ENCODE measurements at regions of chr17 and their contacts with region 1.

Region 1: GRCh38 chr17:31508288-31509094 is 117.0 kb downstream of the RAB11FIP4 start:
- DNase-seq: peak; percentile 83
- H3K4me3 Mint-ChIP-seq: peak overlapping the region; percentile 82
- H3K27ac Mint-ChIP-seq: peak overlapping the region; percentile 100
- H3K4me1 Mint-ChIP-seq: peaks cover 52% of the 10 kb centered on the region
- H3K27me3 Mint-ChIP-seq: no peaks in the 10 kb centered on the region

Region 2: GRCh38 chr17:31327534-31328159 is 180.8 kb before region 1 on chr17:
- intact Hi-C with region 1: no loop called
- DNase-seq: no peak
- H3K4me3 Mint-ChIP-seq: no peak overlapping the region
- H3K27ac Mint-ChIP-seq: peak overlapping the region; percentile 34
- H3K4me1 Mint-ChIP-seq: peaks cover 33% of the 10 kb centered on the region
- H3K27me3 Mint-ChIP-seq: no peaks in the 10 kb centered on the region

Region 3: DNA sequence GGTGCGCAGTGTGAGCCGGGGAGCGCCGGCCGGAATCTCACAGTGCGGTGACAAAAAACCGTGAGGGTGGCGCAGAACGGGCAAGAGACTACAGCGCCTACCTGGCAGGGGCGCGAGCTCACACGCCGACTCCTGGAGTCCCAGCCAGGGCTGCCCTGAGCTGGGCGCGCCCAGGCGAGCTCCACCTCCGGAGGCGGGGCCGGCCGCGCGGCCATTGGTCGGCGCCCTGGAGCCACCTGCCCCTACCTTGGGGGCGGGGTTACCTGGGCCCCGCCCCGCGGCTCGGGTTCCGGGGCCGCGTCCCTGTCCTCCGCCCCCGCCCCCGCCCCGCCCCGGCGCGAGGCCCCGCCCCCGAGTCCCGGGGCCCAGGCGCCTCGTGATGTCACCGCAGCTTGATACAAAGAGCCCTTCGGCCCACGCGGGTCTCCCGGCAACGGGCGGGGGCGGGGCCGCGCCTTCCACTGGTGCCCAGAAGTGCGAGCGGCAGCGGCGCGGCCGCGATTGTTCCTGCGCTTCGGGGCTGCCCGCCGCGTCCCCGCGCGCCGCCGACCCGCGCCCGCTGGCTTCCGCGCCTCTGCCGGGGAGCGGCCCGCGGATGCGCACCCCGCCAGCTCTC is 20.7 kb before region 1 on chr17:
- intact Hi-C with region 1: loop called (anchors 1 kb)
- DNase-seq: peak; percentile 81
- H3K4me3 Mint-ChIP-seq: peak overlapping the region; percentile 75
- H3K27ac Mint-ChIP-seq: peak overlapping the region; percentile 35
- H3K4me1 Mint-ChIP-seq: peaks cover 43% of the 10 kb centered on the region
- H3K27me3 Mint-ChIP-seq: no peaks in the 10 kb centered on the region

Region 4: DNA sequence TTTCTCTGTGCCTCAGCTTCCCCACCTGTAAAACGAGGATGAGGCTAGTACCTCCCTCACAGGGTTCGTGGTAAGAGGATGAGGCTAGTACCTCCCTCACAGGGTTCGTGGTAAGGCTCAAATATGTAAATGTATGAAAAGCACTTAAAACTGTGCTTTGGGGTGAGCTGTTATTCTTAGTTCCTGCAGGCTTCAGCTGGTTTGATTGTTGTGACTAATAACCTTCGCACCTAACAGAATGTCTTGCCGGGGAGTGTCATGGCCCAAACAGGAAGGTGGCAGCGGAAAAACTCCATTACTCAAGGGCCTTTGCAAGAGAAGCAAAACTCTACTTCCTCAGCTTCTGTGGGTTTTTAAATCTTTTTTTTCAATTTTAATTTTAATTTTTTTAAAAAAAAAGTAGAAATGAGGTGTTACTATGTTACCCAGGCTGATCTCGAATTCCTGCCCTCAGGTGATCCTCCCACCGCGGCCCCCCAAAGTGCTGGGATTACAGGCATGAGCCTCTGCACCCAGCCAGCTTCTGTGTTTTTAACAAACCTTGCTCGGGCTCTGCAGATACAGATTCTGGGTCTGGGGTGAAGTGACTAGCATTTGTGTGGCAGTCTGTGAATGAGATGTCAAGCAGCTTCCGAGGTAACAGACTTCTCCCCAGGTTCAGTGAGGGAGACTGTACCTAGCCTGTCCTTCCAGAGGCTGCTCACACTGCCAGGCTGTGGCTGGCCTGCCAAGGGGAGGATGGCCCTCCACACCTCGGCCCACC is 14.1 kb before region 1 on chr17:
- intact Hi-C with region 1: loop called (anchors 1 kb)
- DNase-seq: peak; percentile 65
- H3K4me3 Mint-ChIP-seq: peak overlapping the region; percentile 65
- H3K27ac Mint-ChIP-seq: peak overlapping the region; percentile 93
- H3K4me1 Mint-ChIP-seq: peaks cover 78% of the 10 kb centered on the region
- H3K27me3 Mint-ChIP-seq: no peaks in the 10 kb centered on the region